Mammary epithelial cell (primary cell): ENCODE measurements at regions of chr5 and their contacts with region 1.

Region 1: DNA sequence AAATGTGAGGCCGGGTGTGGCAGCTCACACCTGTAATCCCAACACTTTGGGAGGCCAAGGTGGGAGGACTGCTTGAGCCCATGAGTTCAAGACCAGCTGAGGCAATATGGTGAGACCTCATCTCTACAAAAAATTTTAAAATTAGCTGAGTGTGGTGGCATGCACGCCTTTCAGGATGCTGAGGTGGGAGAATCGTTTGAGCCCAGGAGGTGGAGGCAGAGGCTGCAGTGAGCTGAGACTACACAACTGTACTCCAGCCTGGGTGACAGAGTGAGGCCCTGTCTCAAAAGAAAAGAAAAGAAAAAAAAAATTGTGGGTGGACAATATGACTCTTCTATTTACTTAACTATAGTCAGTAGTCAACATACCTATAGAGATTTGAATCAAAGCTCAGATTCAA is 4.8 kb downstream of the CHD1 start:
- DNase-seq: no peak
- H3K4me3 ChIP-seq: no peak overlapping the region
- H3K27ac ChIP-seq: no peak overlapping the region
- H3K4me1 ChIP-seq: peaks cover 5% of the 10 kb centered on the region
- H3K27me3 ChIP-seq: no peaks in the 10 kb centered on the region
- CTCF ChIP-seq: no peak

Region 2: DNA sequence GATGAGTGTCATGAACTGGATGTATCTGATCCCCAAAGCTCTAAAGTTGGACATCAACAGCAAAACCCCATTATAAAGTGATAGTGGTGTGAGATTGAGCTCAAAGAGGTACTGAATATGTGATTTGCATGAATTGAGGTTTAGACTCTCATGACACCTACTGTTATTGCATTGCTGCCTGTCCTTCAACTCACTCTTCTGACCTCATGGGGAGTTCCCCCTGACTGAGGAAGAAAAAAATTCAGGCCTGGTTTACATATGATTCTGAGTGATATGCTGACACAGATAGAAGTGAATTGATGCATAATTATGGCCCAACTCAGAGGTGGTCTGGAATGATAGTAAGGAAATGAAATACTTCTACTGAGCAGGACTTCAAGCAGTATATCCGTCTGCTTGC is 81.0 kb after region 1 on chr5:
- CTCF ChIA-PET with region 1: no interaction called
- dilution Hi-C with region 1: no loop called
- in situ Hi-C with region 1: no loop called
- intact Hi-C with region 1: no loop called
- DNase-seq: peak; percentile 19
- H3K4me3 ChIP-seq: no peak overlapping the region
- H3K27ac ChIP-seq: no peak overlapping the region
- H3K4me1 ChIP-seq: no peaks in the 10 kb centered on the region
- H3K27me3 ChIP-seq: no peaks in the 10 kb centered on the region
- CTCF ChIP-seq: no peak

Region 3: DNA sequence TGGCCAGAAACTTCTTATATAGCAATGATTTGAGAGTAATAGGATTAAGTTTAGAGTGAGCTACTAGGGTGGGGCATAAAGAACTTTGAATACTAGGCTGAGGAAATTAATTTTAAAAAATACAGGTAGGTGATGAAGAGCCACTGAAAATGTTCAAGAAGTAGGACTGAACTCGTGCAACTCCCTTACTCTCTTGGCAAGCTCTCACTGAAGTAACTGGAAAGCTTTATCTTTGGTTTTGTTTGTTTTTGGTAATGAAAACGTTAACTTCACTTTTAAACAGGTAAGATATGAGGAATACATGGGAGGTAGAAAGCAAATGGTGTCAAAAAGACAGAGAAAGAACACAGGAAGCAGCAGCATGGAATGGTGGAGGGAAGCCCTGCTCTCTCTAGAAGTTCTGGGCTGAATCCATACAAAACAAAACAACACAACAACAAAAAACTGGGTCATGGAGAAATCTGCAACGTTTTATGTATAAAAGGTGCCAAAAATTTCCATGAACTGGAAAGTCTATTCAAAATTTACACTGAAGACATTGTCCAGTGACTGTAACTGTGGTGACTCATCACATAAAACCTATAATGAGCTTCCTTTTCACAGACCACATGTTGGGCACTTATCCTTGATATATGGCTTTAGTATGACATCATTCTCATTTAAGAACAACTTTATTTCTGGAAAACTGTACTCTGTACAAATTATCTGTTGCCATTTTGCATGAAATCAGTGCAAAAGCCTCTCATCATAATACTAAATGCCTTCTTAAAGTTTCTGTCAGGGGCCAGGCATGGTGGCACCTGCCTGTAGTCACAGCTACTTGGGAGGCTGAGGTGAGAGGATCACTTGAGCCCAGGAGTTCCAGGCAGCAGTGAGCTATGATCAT is 96.1 kb after region 1 on chr5:
- CTCF ChIA-PET with region 1: no interaction called
- dilution Hi-C with region 1: loop called (anchors 5 kb)
- in situ Hi-C with region 1: no loop called
- intact Hi-C with region 1: no loop called
- DNase-seq: peak; percentile 75
- H3K4me3 ChIP-seq: no peak overlapping the region
- H3K27ac ChIP-seq: no peak overlapping the region
- H3K4me1 ChIP-seq: peaks cover 11% of the 10 kb centered on the region
- H3K27me3 ChIP-seq: no peaks in the 10 kb centered on the region
- CTCF ChIP-seq: no peak

Region 4: GRCh38 chr5:99068944-99069650 is 145.1 kb after region 1 on chr5:
- CTCF ChIA-PET with region 1: no interaction called
- dilution Hi-C with region 1: no loop called
- in situ Hi-C with region 1: no loop called
- intact Hi-C with region 1: no loop called
- DNase-seq: no peak
- H3K4me3 ChIP-seq: no peak overlapping the region
- H3K27ac ChIP-seq: no peak overlapping the region
- H3K4me1 ChIP-seq: no peaks in the 10 kb centered on the region
- H3K27me3 ChIP-seq: no peaks in the 10 kb centered on the region
- CTCF ChIP-seq: no peak